ENCODE measurements at regions of chr6 and their contacts with region 1.

Region 1: GRCh38 chr6:53359072-53359842 is 10.5 kb upstream of the ELOVL5 start:
- DNase-seq: peak; percentile 95
- ATAC-seq: peak; percentile 96
- H3K4me3 Mint-ChIP-seq: peak overlapping the region; percentile 87
- H3K27ac Mint-ChIP-seq: peak overlapping the region; percentile 98
- H3K4me1 Mint-ChIP-seq: peaks cover 45% of the 10 kb centered on the region
- H3K27me3 Mint-ChIP-seq: no peaks in the 10 kb centered on the region

Region 2: DNA sequence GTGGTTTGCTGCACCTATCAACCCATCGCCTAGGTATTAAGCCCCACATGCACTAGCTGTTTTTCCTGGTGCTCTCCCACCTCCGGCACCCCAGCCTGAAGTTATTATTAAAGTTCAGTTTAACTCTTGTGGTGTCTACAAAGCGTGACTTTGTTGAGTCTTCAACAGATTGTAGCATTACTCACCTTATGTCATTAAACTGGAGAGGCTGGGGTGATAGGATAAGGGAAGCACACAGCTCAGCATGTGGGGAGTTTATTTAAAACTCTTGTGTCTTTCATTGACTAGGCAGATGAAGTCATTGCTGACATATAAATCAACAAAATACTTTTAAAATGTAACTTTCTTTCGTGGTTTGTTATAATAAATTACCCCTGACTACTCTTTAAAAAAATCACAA is 125.9 kb before region 1 on chr6:
- CTCF ChIA-PET with region 1: interaction called, 3 read pairs
- POLR2A ChIA-PET with region 1: no interaction called
- intact Hi-C with region 1: loop called in 1 of 2 experiments (anchors 5 kb)
- DNase-seq: no peak
- ATAC-seq: no peak
- H3K4me3 Mint-ChIP-seq: no peak overlapping the region
- H3K27ac Mint-ChIP-seq: no peak overlapping the region
- H3K4me1 Mint-ChIP-seq: peaks cover 32% of the 10 kb centered on the region
- H3K27me3 Mint-ChIP-seq: no peaks in the 10 kb centered on the region

Region 3: DNA sequence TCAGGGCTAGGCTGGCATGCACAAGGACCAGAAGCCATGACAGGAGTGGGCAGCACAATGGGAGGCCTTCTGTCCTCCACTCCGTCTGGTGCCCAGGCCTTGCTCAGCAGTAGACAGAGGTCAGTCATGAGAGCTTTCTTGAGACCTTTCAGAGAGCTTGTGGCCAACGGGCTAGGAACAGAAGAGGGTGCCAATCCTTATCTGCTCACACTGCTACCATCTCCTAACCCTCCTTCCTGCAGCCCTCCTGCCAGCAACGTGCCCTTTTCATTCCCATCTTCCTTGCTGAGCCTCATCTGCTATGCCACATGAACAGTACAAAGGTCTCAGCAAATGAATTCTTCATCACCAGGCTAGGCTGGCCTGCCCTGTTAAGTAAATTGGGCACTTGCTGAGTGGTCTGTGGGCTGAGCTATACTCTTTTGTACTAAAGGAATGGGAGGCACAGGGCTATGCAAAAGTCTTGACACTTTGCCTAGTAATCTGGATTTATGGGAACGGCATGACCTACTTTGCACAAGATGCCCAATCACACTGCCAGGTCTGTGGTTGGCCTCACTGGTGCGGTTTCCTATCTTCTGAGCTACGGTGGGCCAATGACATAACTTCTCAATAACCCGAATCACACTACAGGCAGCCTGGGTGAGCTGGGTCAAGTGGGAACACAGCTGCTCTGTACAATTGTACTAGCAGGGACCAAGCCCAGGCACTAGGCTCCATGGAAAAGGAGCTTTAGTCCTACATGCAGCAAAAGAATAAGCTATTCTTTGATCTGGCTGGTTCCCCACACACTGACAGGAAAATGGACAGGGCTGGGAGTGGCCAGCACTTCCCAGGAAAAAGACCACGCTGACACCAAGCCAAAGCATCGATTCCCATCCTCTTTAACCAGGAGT is 58.4 kb before region 1 on chr6:
- CTCF ChIA-PET with region 1: no interaction called
- POLR2A ChIA-PET with region 1: interaction called, 3 read pairs
- intact Hi-C with region 1: loop called (anchors 2 kb)
- DNase-seq: peak; percentile 41
- ATAC-seq: peak; percentile 22
- H3K4me3 Mint-ChIP-seq: no peak overlapping the region
- H3K27ac Mint-ChIP-seq: peak overlapping the region; percentile 58
- H3K4me1 Mint-ChIP-seq: peaks cover 76% of the 10 kb centered on the region
- H3K27me3 Mint-ChIP-seq: no peaks in the 10 kb centered on the region

Region 4: GRCh38 chr6:53335208-53335994 is 23.9 kb before region 1 on chr6:
- CTCF ChIA-PET with region 1: no interaction called
- POLR2A ChIA-PET with region 1: no interaction called
- intact Hi-C with region 1: loop called (anchors 1 kb)
- DNase-seq: peak; percentile 77
- ATAC-seq: peak; percentile 82
- H3K4me3 Mint-ChIP-seq: peak overlapping the region; percentile 76
- H3K27ac Mint-ChIP-seq: peak overlapping the region; percentile 99
- H3K4me1 Mint-ChIP-seq: peaks cover 86% of the 10 kb centered on the region
- H3K27me3 Mint-ChIP-seq: no peaks in the 10 kb centered on the region

Region 5: GRCh38 chr6:53437557-53438202 is 78.4 kb after region 1 on chr6:
- CTCF ChIA-PET with region 1: interaction called, 4 read pairs
- POLR2A ChIA-PET with region 1: no interaction called
- intact Hi-C with region 1: loop called in 1 of 2 experiments (anchors 5 kb)
- DNase-seq: peak; percentile 34
- ATAC-seq: peak; percentile 53
- H3K4me3 Mint-ChIP-seq: no peak overlapping the region
- H3K27ac Mint-ChIP-seq: no peak overlapping the region
- H3K4me1 Mint-ChIP-seq: peaks cover 28% of the 10 kb centered on the region
- H3K27me3 Mint-ChIP-seq: peaks cover 3% of the 10 kb centered on the region

Measured in activated CD4-positive, alpha-beta T cell treated with anti-CD3 and anti-CD28 coated beads for 36 hours (primary cell).